ENCODE measurements at regions of chr1 and their contacts with region 1.

Region 1: GRCh38 chr1:235328357-235329138 is at the start of gene GGPS1:
- DNase-seq: peak; percentile 94
- H3K4me3 Mint-ChIP-seq: no peak within 1 kb of the TSS
- H3K27ac Mint-ChIP-seq: peak within 1 kb of the TSS; percentile 88
- H3K4me1 Mint-ChIP-seq: peaks cover 39% of the 10 kb centered on the region
- H3K27me3 Mint-ChIP-seq: no peaks in the 10 kb centered on the region
- total RNA-seq, gene GGPS1: 30.4 and 33.7 TPM in 2 replicates

Region 2: DNA sequence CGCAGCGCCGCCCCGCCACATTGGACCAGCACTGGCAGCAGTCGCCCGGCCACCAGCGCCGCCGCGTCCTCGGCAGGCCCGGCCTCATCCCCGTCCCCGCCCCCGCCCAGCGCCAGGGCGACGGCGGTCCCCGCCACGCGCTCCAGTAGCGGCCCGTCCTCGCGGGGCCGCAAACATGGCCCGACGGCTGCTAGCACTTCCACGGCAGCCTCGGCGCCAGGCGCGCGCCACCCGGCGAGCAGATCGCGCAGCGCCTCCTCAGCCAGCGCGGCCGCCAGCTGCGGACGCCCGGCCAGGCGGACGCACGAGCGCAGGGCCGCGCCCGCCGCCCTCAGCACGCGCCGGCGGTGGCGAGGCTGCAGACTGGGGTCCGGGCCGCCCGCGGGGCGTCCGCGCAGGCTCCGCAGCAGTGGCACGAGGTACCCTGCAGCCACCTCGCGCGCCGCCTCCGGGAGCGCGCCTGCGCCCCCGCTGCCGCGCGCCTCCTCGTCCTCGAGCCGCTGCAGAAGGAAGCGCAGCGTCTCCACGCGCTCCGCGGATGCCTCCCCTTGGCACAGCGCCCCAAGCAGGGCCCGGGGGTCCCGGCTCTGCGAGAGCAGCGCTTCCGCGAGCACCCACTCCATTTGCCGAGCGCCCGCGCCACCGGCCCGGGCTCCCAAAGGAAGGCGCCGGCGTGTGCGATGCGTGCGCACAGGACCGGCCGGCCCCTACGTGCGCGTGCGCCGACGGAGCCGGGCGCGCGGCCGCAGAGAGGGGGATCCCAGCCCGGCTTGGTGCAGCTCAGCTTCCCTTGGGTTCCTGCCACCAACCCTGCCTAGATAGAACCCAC is 849.9 kb before region 1 on chr1 and contains the start of gene TARBP1:
- intact Hi-C with region 1: loop called (anchors 10 kb)
- DNase-seq: peak; percentile 73
- H3K4me3 Mint-ChIP-seq: peak within 1 kb of the TSS; percentile 81
- H3K27ac Mint-ChIP-seq: peak within 1 kb of the TSS; percentile 60
- H3K4me1 Mint-ChIP-seq: peaks cover 47% of the 10 kb centered on the region
- H3K27me3 Mint-ChIP-seq: peaks cover 16% of the 10 kb centered on the region
- total RNA-seq, gene TARBP1: 79.7 and 87.5 TPM in 2 replicates

Region 3: GRCh38 chr1:235128456-235129328 is 199.9 kb before region 1 on chr1 and contains the start of gene TOMM20:
- intact Hi-C with region 1: loop called (anchors 1 kb)
- DNase-seq: peak; percentile 95
- H3K4me3 Mint-ChIP-seq: peak within 1 kb of the TSS; percentile 98
- H3K27ac Mint-ChIP-seq: peak within 1 kb of the TSS; percentile 97
- H3K4me1 Mint-ChIP-seq: peaks cover 37% of the 10 kb centered on the region
- H3K27me3 Mint-ChIP-seq: no peaks in the 10 kb centered on the region
- total RNA-seq, gene TOMM20: 105 and 118 TPM in 2 replicates

Region 4: DNA sequence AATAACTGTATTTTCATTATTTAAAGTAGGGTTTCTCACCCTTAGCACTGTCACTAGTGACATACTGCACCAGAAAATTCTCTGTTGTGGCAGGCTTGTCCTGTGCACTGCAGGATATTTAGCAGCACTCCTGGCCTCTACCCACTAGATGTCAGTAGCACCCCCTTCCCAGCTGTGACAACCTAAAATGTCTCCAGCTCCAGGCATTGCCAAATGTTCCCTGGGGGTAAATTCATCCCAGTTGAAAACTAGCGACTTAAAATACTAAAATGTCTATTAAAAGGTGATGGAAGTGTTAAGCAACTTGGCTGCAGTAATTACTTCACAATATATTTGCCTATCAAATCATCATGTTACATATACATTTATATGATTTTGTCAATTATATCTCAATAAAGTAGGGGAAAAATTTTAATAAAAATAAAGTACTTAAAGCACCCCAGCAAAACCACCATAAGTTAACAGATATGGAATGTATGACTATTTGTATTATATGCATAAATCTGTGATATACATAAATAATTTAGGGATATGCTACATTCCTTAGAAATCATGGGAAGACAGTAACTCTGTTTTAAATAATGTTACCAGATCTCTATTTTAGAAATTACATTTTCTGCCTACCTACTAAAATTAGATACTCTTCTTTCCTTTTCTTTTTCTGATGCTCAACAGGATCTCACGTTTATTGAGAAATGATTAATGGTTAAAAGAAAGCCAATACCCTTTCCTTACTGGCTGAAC is 75.2 kb before region 1 on chr1:
- intact Hi-C with region 1: loop called (anchors 2 kb)
- DNase-seq: peak; percentile 41
- H3K4me3 Mint-ChIP-seq: no peak overlapping the region
- H3K27ac Mint-ChIP-seq: no peak overlapping the region
- H3K4me1 Mint-ChIP-seq: peaks cover 20% of the 10 kb centered on the region
- H3K27me3 Mint-ChIP-seq: no peaks in the 10 kb centered on the region

Region 5: DNA sequence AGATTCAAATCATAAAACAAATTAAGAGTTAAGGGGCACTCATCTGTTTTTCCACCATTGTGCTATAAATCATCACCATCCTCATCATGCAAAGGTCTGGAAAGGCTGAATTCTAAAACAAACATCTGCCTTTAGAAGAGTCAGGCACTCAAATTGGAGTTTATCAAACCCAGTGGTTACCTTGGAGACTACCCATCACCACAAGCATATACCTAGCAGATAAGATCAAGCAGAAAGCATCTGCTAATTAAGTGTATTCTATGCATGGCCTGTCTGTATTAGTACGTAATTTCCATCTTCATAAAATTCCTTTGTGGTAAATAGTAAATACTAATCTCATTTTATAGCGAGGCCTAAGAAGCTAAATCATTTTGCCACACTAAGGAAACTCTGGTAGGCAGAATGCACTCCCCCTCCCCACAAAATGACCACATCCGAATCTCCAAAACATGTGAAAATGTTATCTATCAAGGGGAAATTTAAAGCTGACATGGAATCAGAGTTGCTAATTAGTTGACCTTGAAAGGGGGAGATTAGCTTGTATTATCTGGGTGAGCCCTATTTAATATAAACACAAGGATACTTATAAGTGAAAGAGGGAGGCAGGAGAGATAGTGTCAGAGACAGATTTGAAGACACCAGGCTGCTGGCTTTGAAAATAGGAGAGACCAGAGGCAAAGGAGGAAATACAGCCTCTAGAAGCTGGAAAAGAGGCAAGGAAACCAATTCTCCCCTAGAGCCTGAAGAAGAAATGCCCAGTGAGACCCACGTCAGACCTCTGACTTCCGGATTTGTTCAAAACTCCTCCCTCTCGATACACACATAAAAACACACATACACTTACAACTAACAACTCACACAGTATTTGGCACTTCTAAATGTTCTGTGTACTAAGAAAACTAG is 23.7 kb before region 1 on chr1:
- intact Hi-C with region 1: loop called (anchors 2 kb)
- DNase-seq: no peak
- H3K4me3 Mint-ChIP-seq: peak overlapping the region; percentile 22
- H3K27ac Mint-ChIP-seq: peak overlapping the region; percentile 74
- H3K4me1 Mint-ChIP-seq: peaks cover 35% of the 10 kb centered on the region
- H3K27me3 Mint-ChIP-seq: no peaks in the 10 kb centered on the region

Region 6: GRCh38 chr1:235415008-235415904 is 86.7 kb after region 1 on chr1:
- intact Hi-C with region 1: loop called (anchors 2 kb)
- DNase-seq: peak; percentile 38
- H3K4me3 Mint-ChIP-seq: no peak overlapping the region
- H3K27ac Mint-ChIP-seq: no peak overlapping the region
- H3K4me1 Mint-ChIP-seq: peaks cover 6% of the 10 kb centered on the region
- H3K27me3 Mint-ChIP-seq: no peaks in the 10 kb centered on the region

Region 7: GRCh38 chr1:235866913-235867845 is 538.6 kb after region 1 on chr1:
- intact Hi-C with region 1: loop called (anchors 5 kb)
- DNase-seq: peak; percentile 97
- H3K4me3 Mint-ChIP-seq: peak overlapping the region; percentile 98
- H3K27ac Mint-ChIP-seq: peak overlapping the region; percentile 99
- H3K4me1 Mint-ChIP-seq: peaks cover 52% of the 10 kb centered on the region
- H3K27me3 Mint-ChIP-seq: no peaks in the 10 kb centered on the region

Measured in activated T-helper 2 cell treated with anti-CD3 and anti-CD28 coated beads, Interferon-gamma antibody, Interleukin-2, Interleukin-4, amounts not matched to agents 10 μg/mL and 5 μg/mL and 100 μg/mL, durations not matched to agents 14 hours and 24 hours and 36 hours (primary cell).